ENCODE measurements at regions of chr3 and their contacts with region 1.

Region 1: GRCh38 chr3:130759699-130760338 is 13.2 kb upstream of the PIK3R4 start:
- DNase-seq: no peak
- H3K4me3 ChIP-seq: no peak overlapping the region
- H3K27me3 ChIP-seq: no peaks in the 10 kb centered on the region
- CTCF ChIP-seq: peak; percentile 82

Region 2: GRCh38 chr3:130725746-130726145 is 34.1 kb before region 1 on chr3:
- CTCF ChIA-PET with region 1: no interaction called
- POLR2A ChIA-PET with region 1: no interaction called
- DNase-seq: no peak
- H3K4me3 ChIP-seq: no peak overlapping the region
- H3K27me3 ChIP-seq: no peaks in the 10 kb centered on the region
- CTCF ChIP-seq: no peak

Region 3: GRCh38 chr3:130748981-130749380 is 10.8 kb before region 1 on chr3:
- CTCF ChIA-PET with region 1: interaction called, 11 read pairs
- POLR2A ChIA-PET with region 1: no interaction called
- DNase-seq: peak; percentile 31
- H3K4me3 ChIP-seq: no peak overlapping the region
- H3K27me3 ChIP-seq: no peaks in the 10 kb centered on the region
- CTCF ChIP-seq: no peak

Region 4: DNA sequence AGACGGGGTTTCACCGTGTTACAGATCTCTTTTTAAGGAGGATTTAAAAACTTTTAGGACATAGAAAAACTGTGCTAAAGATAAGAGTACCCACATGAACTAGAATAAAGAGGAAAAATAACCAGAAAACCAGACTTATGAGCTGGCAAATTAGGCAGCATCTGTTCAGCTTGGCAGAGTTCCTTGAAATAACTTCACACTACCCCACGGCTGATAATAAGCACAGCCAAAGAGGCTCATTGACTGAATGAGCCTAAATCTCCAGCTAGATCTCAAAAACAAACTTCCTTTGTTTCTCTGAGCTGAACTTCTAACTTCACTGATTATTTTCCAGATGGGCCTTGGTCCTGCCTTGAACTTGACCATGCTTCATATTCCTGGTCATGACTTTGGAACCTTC is 13.5 kb after region 1 on chr3:
- CTCF ChIA-PET with region 1: interaction called, 11 read pairs
- POLR2A ChIA-PET with region 1: no interaction called
- DNase-seq: no peak
- H3K4me3 ChIP-seq: no peak overlapping the region
- H3K27me3 ChIP-seq: no peaks in the 10 kb centered on the region
- CTCF ChIP-seq: no peak